ENCODE measurements at regions of chr11 and their contacts with region 1.

Region 1: DNA sequence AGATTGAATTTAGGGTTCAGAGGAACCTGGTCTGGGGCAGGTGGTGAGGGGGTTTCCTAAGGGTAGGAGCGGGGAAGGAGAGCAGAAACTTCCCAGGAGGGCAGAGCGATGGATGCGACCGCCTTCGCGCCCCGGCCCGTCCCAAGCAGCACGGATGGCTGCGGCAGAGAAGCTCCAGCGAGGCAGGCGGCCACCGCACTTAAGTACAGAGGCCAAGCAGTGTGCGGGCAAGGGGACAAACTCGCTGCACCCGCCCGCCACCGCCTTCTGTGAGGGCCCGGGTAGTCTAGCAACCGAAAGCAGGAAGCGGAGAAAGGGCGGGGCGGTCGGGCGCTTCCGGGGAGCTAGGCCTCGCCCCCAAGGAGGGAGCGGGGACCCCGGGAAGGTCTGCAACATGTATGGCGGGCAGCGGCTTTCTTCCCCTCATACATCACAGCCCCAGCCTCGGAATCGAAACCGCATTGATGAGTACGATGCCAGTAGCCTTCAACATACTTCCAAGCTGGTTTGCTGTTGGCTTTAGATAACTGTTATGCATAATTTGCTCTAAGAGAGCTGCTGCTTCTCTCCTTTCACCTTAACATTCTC is at the start of gene AGBL2:
- DNase-seq: peak; percentile 79 to 92 (median 82)
- ATAC-seq: peak; percentile 97
- H3K4me3 Mint-ChIP-seq: peak within 1 kb of the TSS; percentile 93 to 99 (median 96)
- H3K27ac Mint-ChIP-seq: peak within 1 kb of the TSS; percentile 93 to 100 (median 98)
- H3K4me1 Mint-ChIP-seq: peaks cover 4 to 18% (median 13%) of the 10 kb centered on the region in 4 donors
- H3K27me3 Mint-ChIP-seq: no peaks in the 10 kb centered on the region
- polyA plus RNA-seq, gene AGBL2: 1.5 to 2.9 (median 2.1) TPM

Region 2: DNA sequence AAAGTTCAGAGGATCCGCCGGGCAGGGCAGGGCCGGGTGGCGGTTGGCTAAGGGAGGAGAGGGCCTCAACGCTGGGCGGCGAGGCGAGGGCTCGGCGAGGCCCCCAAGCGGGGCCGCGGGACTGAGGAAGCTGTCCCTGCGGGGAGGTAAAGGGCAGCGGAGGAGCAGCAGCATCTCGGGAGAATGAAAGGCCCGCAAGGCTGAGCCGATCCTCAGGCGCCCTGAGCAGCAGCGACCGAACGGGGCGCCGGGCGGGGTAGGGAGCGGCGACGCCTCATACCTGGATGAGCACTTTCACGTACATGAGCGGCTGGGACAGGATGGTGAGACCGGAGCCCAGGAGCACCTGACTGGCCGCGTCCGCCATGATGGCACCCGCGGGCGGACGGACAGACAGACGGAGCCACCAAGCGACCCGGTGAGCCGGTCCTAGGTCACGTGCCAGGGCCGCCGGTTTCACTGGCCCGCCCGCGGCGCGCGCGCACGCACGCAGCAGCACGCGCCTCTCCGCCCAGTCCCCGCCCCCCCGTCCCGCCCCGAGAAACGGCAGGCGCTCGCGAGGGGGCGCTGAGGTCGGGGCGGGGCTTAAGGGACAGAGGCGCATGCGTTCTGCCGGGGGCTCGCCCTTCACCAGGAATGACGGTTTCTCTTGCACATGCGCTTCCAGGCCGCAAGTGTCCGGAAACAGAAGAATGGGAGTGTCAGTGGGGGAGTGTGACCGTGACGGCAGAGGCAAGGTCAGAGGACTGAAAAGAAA is 72.9 kb before region 1 on chr11 and contains the start of gene MTCH2:
- POLR2A ChIA-PET with region 1: interaction called, 11 read pairs
- DNase-seq: peak; percentile 93 to 97 (median 95)
- ATAC-seq: peak; percentile 85 to 88
- H3K4me3 Mint-ChIP-seq: peak within 1 kb of the TSS; percentile 88 to 99 (median 94)
- H3K27ac Mint-ChIP-seq: peak within 1 kb of the TSS; percentile 83 to 99 (median 98)
- H3K4me1 Mint-ChIP-seq: peaks cover 9 to 35% (median 24%) of the 10 kb centered on the region in 4 donors
- H3K27me3 Mint-ChIP-seq: no peaks in the 10 kb centered on the region
- polyA plus RNA-seq, gene MTCH2: 54.2 to 67.0 (median 62.3) TPM

Region 3: GRCh38 chr11:47766305-47767227 is 51.4 kb after region 1 on chr11:
- POLR2A ChIA-PET with region 1: interaction called, 37 read pairs
- DNase-seq: peak; percentile 62 to 86 (median 74)
- ATAC-seq: peak; percentile 40 to 42
- H3K4me3 Mint-ChIP-seq: peak overlapping the region; percentile 93 to 98 (median 97)
- H3K27ac Mint-ChIP-seq: peak overlapping the region; percentile 96 to 100 (median 100)
- H3K4me1 Mint-ChIP-seq: peaks cover 10 to 42% (median 32%) of the 10 kb centered on the region in 4 donors
- H3K27me3 Mint-ChIP-seq: no peaks in the 10 kb centered on the region